Transverse colon (tissue), 4 donors: ENCODE measurements at regions of chr3 and their contacts with region 1.

Region 1: GRCh38 chr3:121545574-121546455 is at the start of gene POLQ:
- DNase-seq: peak; percentile 92
- H3K4me3 ChIP-seq: peak within 1 kb of the TSS; percentile 28 to 68 (median 55)
- H3K27ac ChIP-seq: peak within 1 kb of the TSS; percentile 84 to 92 (median 87)
- H3K4me1 ChIP-seq: peaks cover 0 to 34% (median 17%) of the 10 kb centered on the region in 4 donors
- H3K27me3 ChIP-seq: no peaks in the 10 kb centered on the region
- CTCF ChIP-seq: no peak
- EP300 ChIP-seq: no peak
- POLR2A ChIP-seq: peak; percentile 26
- total RNA-seq, gene POLQ: under 0.01 to 25.1 (median 0.94) TPM

Region 2: GRCh38 chr3:121834696-121835464 is 289.1 kb after region 1 on chr3 and contains the starts of genes EAF2 and IQCB1:
- in situ Hi-C with region 1: loop called in 1 of 4 experiments (anchors 25 kb)
- intact Hi-C with region 1: no loop called
- DNase-seq: peak; percentile 98
- H3K4me3 ChIP-seq: peak within 1 kb of the TSS; percentile 62 to 95 (median 86)
- H3K27ac ChIP-seq: peak within 1 kb of the TSS; percentile 83 to 95 (median 90)
- H3K4me1 ChIP-seq: peaks cover 4 to 24% (median 16%) of the 10 kb centered on the region in 4 donors
- H3K27me3 ChIP-seq: no peaks in the 10 kb centered on the region
- CTCF ChIP-seq: no peak
- EP300 ChIP-seq: no peak
- POLR2A ChIP-seq: peak; percentile 95
- total RNA-seq, gene EAF2: 2.2 to 26.0 (median 7.4) TPM
- total RNA-seq, gene IQCB1: 4.5 to 52.1 (median 29.1) TPM

Region 3: DNA sequence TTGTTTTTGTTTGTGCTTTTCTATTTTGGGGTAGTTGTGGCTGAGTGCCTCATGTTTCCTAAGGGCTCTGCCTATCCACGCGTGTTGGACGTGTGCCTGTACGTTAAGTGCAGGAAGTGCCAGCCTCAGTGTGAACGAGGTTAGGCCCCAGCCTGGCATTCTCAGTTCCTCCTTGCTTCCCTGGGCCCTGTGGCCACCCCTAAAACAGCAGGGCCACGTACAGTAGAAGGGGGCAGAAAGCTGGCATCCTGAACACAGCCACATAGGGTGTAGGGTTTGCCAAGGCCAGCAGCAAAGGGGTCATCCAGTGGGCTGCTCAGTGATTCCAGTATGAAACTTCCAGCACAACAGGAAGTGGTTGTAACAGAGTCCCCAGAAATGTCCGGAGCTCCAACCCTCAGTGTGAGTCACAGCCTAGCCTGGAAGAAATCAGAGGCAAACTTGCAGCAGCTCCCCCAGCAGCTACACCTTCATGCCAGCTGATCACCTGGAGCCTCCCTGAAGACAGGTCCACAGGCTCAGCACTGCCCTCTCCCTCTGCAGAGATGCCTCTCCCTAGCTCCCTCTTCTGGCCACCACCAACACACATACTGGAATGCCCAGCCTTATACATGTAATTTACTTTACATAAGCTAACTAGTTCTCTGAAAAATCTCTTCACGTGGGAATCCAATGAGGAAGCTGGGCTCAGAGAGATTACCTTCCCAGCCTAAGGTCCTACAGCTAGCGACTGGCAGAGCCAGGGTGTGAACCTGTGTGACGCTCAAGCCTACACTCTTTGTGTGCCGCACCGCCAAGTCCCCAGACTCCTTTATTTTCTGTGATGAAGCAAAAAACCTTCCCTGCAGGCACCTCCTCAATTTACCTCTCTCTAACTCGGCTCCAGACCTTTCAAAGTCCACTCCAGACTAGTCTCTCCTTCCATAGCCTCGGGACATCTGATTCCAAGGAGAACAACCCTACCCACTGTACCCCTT is 449.6 kb after region 1 on chr3:
- in situ Hi-C with region 1: loop called in 1 of 4 experiments (anchors 10 kb)
- intact Hi-C with region 1: no loop called
- DNase-seq: peak; percentile 78
- H3K4me3 ChIP-seq: no peak overlapping the region
- H3K27ac ChIP-seq: peak overlapping the region; percentile 26 to 66 (median 54)
- H3K4me1 ChIP-seq: peaks cover 0 to 10% (median 1%) of the 10 kb centered on the region in 4 donors
- H3K27me3 ChIP-seq: no peaks in the 10 kb centered on the region
- CTCF ChIP-seq: peak; percentile 41 to 64 (median 53)
- EP300 ChIP-seq: no peak
- POLR2A ChIP-seq: no peak